ENCODE measurements at regions of chr12 and their contacts with region 1.

Region 1: GRCh38 chr12:26195641-26196420 is 458 bp downstream of the SSPN start:
- DNase-seq: peak; percentile 78 to 88
- ATAC-seq: peak; percentile 86
- H3K4me3 ChIP-seq: peak overlapping the region; percentile 50 to 69
- H3K27ac ChIP-seq: peak overlapping the region; percentile 49 to 78
- H3K4me1 ChIP-seq: peaks cover 0 to 2% of the 10 kb centered on the region in 2 donors
- H3K27me3 ChIP-seq: no peaks in the 10 kb centered on the region

Region 2: DNA sequence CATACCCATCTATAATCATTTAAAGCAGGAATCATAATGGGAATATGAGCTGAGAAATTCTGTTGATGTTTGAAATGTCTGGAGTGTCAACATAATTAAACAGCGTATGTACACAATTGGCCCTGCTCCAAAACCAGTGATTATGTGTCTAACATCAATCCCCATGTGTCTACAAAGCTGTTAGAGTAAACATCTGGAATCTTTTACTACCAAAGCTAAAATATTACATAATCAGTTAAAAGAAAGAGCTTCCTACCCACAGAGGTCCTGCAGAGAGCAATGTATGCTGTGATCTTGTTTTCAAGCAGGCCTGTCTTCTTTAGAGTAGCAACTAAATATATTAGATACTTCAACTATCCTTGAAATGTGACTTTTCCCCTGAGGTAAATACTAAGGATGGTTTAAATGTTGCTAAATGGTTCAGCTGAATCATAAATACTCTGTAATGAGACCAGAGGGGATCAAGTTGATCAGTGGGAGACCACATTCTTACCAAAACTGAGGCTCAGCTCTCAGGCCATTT is 163.1 kb before region 1 on chr12:
- intact Hi-C with region 1: no loop called
- DNase-seq: no peak
- ATAC-seq: no peak
- H3K4me3 ChIP-seq: no peak overlapping the region
- H3K27ac ChIP-seq: no peak overlapping the region
- H3K4me1 ChIP-seq: peaks cover 10 to 12% of the 10 kb centered on the region in 2 donors
- H3K27me3 ChIP-seq: no peaks in the 10 kb centered on the region

Region 3: GRCh38 chr12:26126340-26127284 is 69.2 kb before region 1 on chr12:
- intact Hi-C with region 1: loop called (anchors 2 to 5 kb)
- DNase-seq: peak; percentile 94 to 95
- ATAC-seq: peak; percentile 89
- H3K4me3 ChIP-seq: peak overlapping the region; percentile 86 to 96
- H3K27ac ChIP-seq: peak overlapping the region; percentile 91 to 92
- H3K4me1 ChIP-seq: no peaks in the 10 kb centered on the region
- H3K27me3 ChIP-seq: no peaks in the 10 kb centered on the region

Region 4: DNA sequence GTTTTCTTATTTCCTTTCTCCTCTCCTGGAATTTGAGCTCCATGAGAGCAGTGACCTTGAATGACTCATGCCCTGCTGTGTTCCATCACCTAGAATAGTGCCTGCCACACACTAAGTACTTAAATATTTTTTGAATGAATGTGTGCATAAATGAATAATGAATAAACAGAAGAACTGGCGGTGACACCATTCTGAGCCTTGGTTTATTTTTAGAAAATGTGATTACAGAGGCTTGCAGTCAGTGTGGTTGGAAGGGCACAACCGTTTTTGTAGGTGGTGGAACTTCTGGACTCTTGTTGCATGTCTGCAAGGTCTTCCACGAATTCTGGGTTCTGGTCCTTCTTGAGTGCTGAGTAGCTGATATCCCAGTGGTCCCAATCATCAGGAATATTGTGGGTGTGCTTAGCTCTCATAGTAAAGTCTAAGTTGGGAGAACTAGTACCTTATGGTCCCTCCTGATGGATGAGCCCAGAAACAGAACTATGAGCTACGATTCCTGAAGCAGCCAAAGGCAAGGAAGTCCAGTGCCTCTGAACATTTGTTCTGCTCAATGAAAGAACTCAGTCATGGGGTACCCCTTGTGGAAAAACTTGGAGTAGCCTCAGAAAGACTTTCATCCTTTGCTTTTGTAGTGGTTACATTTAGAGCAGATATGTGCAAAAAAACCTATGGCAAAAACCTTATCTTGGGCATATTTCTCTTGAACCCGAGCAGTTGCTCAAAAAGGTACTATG is 42.2 kb before region 1 on chr12:
- intact Hi-C with region 1: loop called in 1 of 2 experiments (anchors 5 kb)
- DNase-seq: no peak
- ATAC-seq: peak; percentile 75
- H3K4me3 ChIP-seq: no peak overlapping the region
- H3K27ac ChIP-seq: peak overlapping the region; percentile 76 to 88
- H3K4me1 ChIP-seq: peaks cover 5 to 7% of the 10 kb centered on the region in 2 donors
- H3K27me3 ChIP-seq: no peaks in the 10 kb centered on the region

Region 5: GRCh38 chr12:26177283-26177682 is 18.5 kb before region 1 on chr12:
- intact Hi-C with region 1: no loop called
- DNase-seq: no peak
- ATAC-seq: no peak
- H3K4me3 ChIP-seq: no peak overlapping the region
- H3K27ac ChIP-seq: no peak overlapping the region
- H3K4me1 ChIP-seq: no peaks in the 10 kb centered on the region
- H3K27me3 ChIP-seq: no peaks in the 10 kb centered on the region

Region 6: GRCh38 chr12:26214121-26214520 is 18.3 kb after region 1 on chr12:
- intact Hi-C with region 1: no loop called
- DNase-seq: no peak
- ATAC-seq: no peak
- H3K4me3 ChIP-seq: no peak overlapping the region
- H3K27ac ChIP-seq: no peak overlapping the region
- H3K4me1 ChIP-seq: peaks cover 0 to 2% of the 10 kb centered on the region in 2 donors
- H3K27me3 ChIP-seq: no peaks in the 10 kb centered on the region

Region 7: DNA sequence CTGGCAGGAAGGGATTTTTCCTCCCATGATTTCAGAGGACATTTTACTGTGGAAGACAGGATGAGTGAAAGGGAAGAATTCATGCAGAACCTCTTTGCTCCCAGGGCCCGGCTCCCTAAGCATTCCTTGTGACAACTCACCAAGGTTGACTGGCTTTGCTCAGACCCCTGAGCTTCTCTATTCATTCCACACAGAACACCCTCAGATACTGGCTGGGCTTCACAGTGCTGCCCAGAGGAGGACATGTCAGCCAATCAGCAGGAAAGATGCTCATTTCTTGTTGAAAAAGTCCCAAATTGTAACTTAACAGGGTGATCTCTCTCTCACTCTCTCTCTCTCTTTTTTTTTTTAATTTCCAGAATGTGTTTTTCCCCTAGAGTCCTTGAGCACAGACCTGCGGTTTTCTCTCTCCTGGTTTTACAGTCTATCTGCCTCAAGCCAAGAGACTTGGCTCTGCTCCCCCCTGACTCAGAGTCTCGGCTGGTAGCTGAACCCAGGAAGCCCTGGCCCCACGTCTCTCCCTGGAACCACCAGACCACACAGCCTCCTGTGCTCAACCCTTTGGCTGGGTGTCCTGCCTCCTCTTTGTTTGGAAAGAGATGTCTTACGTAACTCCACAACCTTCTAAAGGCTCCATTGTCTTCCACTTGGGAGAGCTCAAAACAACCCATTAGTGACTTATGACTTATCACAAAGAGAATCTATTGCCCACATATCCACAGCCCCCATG is 43.5 kb after region 1 on chr12:
- intact Hi-C with region 1: loop called in 1 of 2 experiments (anchors 5 kb)
- DNase-seq: peak; percentile 92 to 94
- ATAC-seq: peak; percentile 87
- H3K4me3 ChIP-seq: no peak overlapping the region
- H3K27ac ChIP-seq: peak overlapping the region in 1 of 2 donors; percentile 19
- H3K4me1 ChIP-seq: peaks cover 0 to 2% of the 10 kb centered on the region in 2 donors
- H3K27me3 ChIP-seq: no peaks in the 10 kb centered on the region

Region 8: DNA sequence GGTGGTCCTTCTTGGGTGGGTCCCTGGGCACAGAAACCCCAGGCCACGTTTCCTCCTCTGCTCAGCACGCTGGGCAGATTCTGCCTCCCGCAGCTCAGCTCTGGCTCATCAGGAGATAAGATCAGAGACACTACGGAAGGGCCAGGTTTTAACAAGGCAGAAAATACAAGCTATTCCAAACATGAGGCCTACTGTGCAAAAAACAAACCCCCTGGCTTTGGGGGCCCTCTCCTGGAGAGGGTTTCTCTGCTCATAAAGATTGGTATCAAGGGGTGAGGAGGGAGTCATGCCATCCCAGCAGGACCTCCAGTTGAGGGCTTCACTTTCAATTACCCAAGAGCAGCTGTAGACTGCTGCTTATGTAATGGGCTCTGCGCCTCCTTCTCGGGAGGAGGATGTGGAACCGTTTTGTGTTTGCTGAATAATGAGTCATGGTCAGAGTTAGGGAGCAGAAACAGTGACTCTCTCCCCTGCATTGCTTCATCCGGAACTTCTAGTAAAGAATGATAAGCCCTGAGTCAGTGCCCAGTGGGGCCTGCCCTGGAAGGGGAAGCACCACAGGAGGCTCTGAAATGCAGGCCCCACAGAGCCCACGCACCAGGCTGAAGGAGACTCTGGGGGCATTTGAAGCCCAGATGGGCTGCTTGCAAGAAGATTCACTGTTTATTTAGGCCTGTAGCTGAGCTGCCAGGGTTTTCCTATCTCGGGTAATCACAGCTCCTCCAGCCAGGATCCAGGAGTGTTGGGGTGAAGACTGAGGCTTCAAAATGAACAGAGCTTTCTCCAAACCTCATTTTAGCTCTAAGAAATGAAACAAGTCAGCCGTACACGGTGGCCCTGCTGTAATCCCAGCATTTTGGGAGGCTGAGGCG is 78.8 kb after region 1 on chr12:
- intact Hi-C with region 1: loop called (anchors 2 to 5 kb)
- DNase-seq: peak; percentile 89 to 92
- ATAC-seq: peak; percentile 96
- H3K4me3 ChIP-seq: no peak overlapping the region
- H3K27ac ChIP-seq: peak overlapping the region; percentile 59 to 84
- H3K4me1 ChIP-seq: no peaks in the 10 kb centered on the region
- H3K27me3 ChIP-seq: no peaks in the 10 kb centered on the region

Region 9: DNA sequence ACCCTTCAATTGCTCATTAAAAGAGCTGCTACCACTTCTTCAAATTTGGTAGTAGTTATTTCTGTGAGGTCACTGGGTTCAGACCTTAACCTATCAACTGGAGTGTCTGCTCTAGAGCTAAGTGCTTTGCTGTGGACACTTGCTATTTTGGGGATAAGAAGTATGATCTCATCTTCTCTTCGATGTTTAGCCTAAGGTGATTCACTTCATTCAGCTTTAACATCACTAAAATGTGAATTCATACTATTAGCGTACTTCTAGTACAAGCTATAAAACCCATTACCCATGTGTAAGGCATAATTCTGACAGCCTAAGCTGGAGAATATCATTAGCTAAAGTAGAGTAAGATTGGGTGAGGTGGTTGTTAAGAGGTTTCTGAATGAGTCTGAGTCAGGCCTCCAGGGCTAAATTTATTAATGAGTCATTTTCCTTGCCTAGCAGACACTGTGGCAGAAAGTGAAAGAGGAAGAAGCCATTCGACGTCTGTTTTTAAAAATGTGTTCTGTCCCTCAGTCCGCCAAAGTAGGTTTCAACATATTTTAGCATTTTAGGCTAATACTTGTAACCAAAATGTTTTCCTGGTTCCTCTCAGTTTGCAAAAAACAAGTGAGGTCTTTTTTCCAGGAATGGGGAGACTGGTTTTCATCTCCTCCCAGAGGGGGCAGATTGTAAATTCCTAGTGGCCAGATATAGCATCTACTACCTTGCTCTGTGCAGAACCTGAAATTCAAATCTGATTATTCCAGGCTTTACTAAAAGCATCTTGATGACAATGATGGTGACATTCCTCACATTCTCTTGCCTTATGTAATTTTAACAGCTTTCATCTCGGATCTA is 103.2 kb after region 1 on chr12:
- intact Hi-C with region 1: loop called in 1 of 2 experiments (anchors 5 kb)
- DNase-seq: no peak
- ATAC-seq: peak; percentile 91
- H3K4me3 ChIP-seq: peak overlapping the region in 1 of 2 donors; percentile 54
- H3K27ac ChIP-seq: peak overlapping the region; percentile 67 to 68
- H3K4me1 ChIP-seq: peaks cover 0 to 2% of the 10 kb centered on the region in 2 donors
- H3K27me3 ChIP-seq: no peaks in the 10 kb centered on the region

Region 10: DNA sequence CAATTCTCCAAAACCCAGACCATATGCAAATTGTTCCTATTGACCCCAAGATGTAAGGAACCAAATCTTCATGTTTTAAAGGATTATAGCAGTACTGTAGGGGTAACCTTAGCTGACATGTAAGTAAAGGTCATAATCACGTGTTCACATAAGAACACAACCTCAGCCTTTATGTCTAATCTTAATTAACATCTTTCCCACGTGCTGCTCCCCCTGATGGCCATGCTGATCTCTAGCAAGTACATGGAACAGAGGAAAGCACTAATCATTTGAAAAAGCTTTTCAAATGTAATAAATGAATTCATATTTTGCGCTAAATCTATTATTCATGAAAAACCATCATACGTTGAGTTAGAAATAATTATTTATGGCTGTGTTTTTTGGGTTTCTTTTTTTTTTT is 667.7 kb after region 1 on chr12:
- intact Hi-C with region 1: no loop called
- DNase-seq: no peak
- ATAC-seq: no peak
- H3K4me3 ChIP-seq: no peak overlapping the region
- H3K27ac ChIP-seq: no peak overlapping the region
- H3K4me1 ChIP-seq: no peaks in the 10 kb centered on the region
- H3K27me3 ChIP-seq: no peaks in the 10 kb centered on the region

Measured in aorta (tissue), 5 donors.